ENCODE measurements at regions of chr11 and their contacts with region 1.

Region 1: DNA sequence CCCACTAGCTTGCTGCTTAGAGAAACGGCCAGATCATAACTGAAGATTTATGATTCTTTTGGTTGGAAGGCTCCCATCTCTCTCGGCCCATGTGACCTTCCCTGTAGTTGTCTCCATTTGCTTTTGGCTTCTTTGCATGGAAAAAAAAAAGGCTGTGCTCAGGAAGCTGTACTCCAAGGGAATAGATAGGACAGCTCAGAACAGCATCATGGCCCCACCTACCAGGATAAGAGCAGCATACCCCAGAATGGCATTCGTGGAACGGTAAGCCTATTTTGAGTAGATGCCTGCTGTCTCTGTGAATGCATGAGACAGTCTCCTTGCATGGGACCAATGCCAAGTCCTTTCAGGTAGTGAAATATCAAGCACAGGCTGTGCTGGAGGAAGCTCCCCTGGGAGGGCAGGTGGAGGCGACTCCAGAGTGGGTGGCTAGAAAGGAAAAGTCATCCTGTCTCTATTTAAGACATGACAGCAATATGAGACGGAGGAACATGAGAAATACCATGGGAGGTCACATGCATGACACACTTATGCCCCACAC is 94.1 kb upstream of the AMOTL1 start:
- DNase-seq: no peak
- H3K4me3 ChIP-seq: no peak overlapping the region
- CTCF ChIP-seq: no peak

Region 2: DNA sequence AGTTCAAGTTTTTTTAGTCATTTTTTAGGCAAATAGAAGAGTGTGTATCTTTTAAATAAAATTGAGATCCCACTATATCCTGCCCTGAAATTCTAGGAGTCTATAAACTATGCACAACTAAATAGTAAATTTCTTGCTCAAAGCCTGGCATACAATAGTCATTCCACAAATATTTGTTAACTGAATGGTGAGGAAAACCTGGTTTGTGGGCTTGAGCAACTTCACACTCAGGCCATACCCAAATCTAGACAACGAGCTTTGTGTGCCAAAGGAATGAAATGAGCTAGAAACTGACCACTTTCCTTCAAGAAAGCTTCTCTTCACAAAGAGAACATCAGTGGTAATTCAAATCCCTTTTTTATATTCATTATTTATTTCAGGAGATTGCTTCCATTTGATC is 54.5 kb after region 1 on chr11:
- in situ Hi-C with region 1: loop called (anchors 5 kb)
- DNase-seq: peak; percentile 65
- H3K4me3 ChIP-seq: no peak overlapping the region
- CTCF ChIP-seq: no peak

Measured in astrocyte of the cerebellum (primary cell).